ENCODE measurements at regions of chr16 and their contacts with region 1.

Region 1: DNA sequence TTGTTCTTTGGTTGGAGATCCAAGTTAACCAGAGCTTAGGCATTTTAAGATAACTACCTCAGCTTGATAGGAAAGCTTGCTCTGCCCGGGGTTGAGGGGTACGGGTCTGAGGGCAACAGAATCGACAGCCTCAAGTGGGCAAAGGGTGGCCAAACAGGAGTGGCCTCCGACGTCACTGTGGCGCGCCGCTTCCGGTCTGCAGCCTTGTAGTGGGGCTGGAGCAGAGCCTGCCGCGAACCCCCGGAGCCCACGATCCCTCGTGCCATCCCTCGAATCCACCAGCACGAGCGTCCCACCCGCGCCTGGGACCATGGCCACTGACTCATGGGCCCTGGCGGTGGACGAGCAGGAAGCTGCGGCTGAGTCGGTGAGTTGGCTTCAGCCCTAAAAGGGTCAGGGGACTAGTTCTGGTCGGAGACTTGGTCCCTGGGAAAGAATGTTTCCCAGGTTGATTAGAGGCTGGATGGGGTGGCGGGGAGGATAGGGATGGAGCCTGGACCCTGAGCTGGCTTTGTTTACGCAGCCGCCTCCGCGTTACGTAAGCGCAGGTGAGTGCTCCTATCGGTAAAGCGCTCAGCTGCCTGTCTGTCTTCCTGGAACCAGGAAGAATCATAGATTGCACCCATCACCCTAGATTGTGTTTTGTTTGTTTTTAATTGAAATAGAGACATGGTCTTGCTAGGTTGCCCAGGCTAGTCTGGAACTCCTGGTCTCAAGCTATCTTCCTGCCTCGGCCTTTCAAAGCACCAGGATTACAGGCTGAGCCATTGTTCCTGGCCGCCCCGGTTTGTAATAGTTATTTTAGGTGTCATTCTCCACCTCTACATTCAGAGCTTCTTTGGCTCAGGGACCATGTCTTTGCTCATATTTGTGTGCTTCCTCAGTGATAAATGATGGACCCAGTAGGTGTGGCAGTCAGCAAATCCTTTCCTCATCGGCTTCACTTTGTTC is at the start of gene DDX19B:
- DNase-seq: peak; percentile 85
- ATAC-seq: peak; percentile 92
- H3K4me3 Mint-ChIP-seq: peak within 1 kb of the TSS; percentile 85
- H3K27ac Mint-ChIP-seq: peak within 1 kb of the TSS; percentile 85
- H3K4me1 Mint-ChIP-seq: peaks cover 32% of the 10 kb centered on the region
- H3K27me3 Mint-ChIP-seq: no peaks in the 10 kb centered on the region
- total RNA-seq, gene DDX19B: 32.9 to 34.8 TPM

Region 2: GRCh38 chr16:70345840-70346239 is 46.6 kb after region 1 on chr16:
- CTCF ChIA-PET with region 1: interaction called, 11 read pairs
- DNase-seq: no peak
- ATAC-seq: no peak
- H3K4me3 Mint-ChIP-seq: peak overlapping the region; percentile 98
- H3K27ac Mint-ChIP-seq: peak overlapping the region; percentile 99
- H3K4me1 Mint-ChIP-seq: peaks cover 41% of the 10 kb centered on the region
- H3K27me3 Mint-ChIP-seq: no peaks in the 10 kb centered on the region

Region 3: GRCh38 chr16:70402916-70403659 is 103.8 kb after region 1 on chr16:
- CTCF ChIA-PET with region 1: no interaction called
- DNase-seq: no peak
- ATAC-seq: no peak
- H3K4me3 Mint-ChIP-seq: no peak overlapping the region
- H3K27ac Mint-ChIP-seq: no peak overlapping the region
- H3K4me1 Mint-ChIP-seq: peaks cover 29% of the 10 kb centered on the region
- H3K27me3 Mint-ChIP-seq: no peaks in the 10 kb centered on the region

Region 4: DNA sequence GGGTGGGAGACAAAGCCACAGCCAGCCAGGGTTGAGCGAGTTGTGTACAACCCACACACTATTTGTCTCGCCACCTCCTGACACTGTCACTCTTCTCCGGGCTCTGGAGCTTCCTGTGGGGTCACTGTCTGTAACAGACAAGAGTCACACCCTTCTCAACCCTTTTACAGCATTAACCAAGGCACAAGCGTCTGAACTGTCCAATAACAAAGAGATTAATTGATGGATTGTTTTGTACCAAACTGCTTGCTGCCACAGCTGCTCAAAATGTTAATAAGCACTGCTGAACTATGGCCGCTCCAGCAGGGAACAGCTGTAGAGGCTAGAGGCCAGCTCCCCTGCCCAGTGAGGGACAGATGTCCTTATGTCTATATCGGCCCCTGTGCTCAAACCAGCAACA is 956.5 kb after region 1 on chr16:
- CTCF ChIA-PET with region 1: no interaction called
- DNase-seq: no peak
- ATAC-seq: no peak
- H3K4me3 Mint-ChIP-seq: no peak overlapping the region
- H3K27ac Mint-ChIP-seq: no peak overlapping the region
- H3K4me1 Mint-ChIP-seq: no peaks in the 10 kb centered on the region
- H3K27me3 Mint-ChIP-seq: peaks cover 33% of the 10 kb centered on the region